Caco-2 (cell line): ENCODE measurements at regions of chr14 and their contacts with region 1.

Region 1: GRCh38 chr14:99683619-99684355 is at the start of gene CYP46A1:
- DNase-seq: peak; percentile 99
- H3K4me3 ChIP-seq: peak within 1 kb of the TSS; percentile 57
- H3K4me3 Mint-ChIP-seq: peak within 1 kb of the TSS; percentile 76
- H3K27ac Mint-ChIP-seq: no peak within 1 kb of the TSS
- H3K4me1 ChIP-seq: peaks cover 9% of the 10 kb centered on the region; the same call in 1 of the 2 replicates
- H3K4me1 Mint-ChIP-seq: peaks cover 7% of the 10 kb centered on the region
- H3K27me3 ChIP-seq: no peaks in the 10 kb centered on the region
- H3K27me3 Mint-ChIP-seq: peaks cover 24% of the 10 kb centered on the region
- CTCF ChIP-seq: no peak
- total RNA-seq, gene CYP46A1: 0.05 and 0.09 TPM in 2 replicates

Region 2: DNA sequence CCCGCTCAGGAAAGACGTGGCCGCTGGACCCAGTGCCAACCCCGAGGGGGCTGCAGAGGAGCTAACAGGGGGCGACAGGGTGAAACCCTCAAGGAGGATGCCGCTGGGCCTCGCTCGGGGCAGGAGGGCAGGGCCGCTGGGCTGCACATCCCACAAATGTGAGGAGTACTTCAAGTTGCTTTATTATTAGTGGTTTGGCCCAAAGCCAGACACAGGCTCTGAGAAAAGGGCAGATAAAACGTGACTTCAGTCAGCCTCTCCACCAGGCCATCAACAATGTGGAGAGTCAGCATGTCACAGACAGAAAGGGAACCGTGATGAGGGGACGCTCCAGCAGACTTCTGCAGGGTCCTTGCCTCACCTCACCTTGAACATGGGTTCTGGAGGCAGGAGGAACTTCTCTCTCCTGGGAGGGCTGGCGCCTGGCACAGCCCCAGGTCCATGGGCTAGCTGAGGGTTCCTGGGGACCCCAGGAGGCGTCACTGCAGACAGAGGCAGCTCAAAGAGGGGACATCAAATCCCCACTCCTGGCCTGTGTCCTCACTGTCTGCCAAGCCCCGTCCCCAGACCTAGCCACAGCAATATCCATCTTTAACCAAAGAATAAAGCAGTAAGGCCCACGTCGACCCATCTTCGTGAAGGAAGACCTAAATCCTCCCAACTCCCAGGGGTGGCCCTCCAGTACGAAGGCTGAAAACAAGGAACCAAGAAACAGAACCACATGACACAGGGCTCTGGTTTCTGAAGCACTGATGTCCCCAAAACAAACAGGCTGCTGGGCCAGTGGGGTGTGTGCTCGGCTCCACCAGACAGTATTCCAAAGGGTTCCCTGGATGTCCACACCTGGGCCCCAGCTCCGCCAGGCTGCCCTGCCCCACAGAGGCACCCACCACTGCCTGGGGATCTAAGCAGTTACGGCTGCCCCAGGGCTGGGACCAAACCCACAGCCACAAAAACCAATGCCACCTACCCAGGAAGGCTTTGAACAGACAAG is 114.9 kb before region 1 on chr14:
- CTCF ChIA-PET with region 1: no interaction called
- POLR2A ChIA-PET with region 1: no interaction called
- intact Hi-C with region 1: no loop called
- DNase-seq: no peak
- H3K4me3 ChIP-seq: no peak overlapping the region
- H3K4me3 Mint-ChIP-seq: no peak overlapping the region
- H3K27ac Mint-ChIP-seq: no peak overlapping the region
- H3K4me1 ChIP-seq: peaks cover 41% of the 10 kb centered on the region
- H3K4me1 Mint-ChIP-seq: peaks cover 23% of the 10 kb centered on the region
- H3K27me3 ChIP-seq: no peaks in the 10 kb centered on the region
- H3K27me3 Mint-ChIP-seq: no peaks in the 10 kb centered on the region
- CTCF ChIP-seq: no peak

Region 3: GRCh38 chr14:99793213-99794150 is 109.7 kb after region 1 on chr14 and contains the start of gene EML1:
- CTCF ChIA-PET with region 1: no interaction called
- POLR2A ChIA-PET with region 1: no interaction called
- intact Hi-C with region 1: loop called (anchors 5 kb)
- DNase-seq: peak; percentile 75 to 91
- H3K4me3 ChIP-seq: peak within 1 kb of the TSS; percentile 44
- H3K4me3 Mint-ChIP-seq: peak within 1 kb of the TSS; percentile 64
- H3K27ac Mint-ChIP-seq: peak within 1 kb of the TSS; percentile 57
- H3K4me1 ChIP-seq: no peaks in the 10 kb centered on the region
- H3K4me1 Mint-ChIP-seq: peaks cover 14% of the 10 kb centered on the region
- H3K27me3 ChIP-seq: no peaks in the 10 kb centered on the region
- H3K27me3 Mint-ChIP-seq: no peaks in the 10 kb centered on the region
- CTCF ChIP-seq: no peak
- total RNA-seq, gene EML1: 5.9 and 7.2 TPM in 2 replicates

Region 4: GRCh38 chr14:99884834-99885648 is 201.3 kb after region 1 on chr14:
- CTCF ChIA-PET with region 1: interaction called, 3 read pairs
- POLR2A ChIA-PET with region 1: no interaction called
- intact Hi-C with region 1: loop called (anchors 1 kb)
- DNase-seq: peak in 1 of 2 experiments; percentile 64
- H3K4me3 ChIP-seq: no peak overlapping the region
- H3K4me3 Mint-ChIP-seq: no peak overlapping the region
- H3K27ac Mint-ChIP-seq: no peak overlapping the region
- H3K4me1 ChIP-seq: no peaks in the 10 kb centered on the region
- H3K4me1 Mint-ChIP-seq: no peaks in the 10 kb centered on the region
- H3K27me3 ChIP-seq: no peaks in the 10 kb centered on the region
- H3K27me3 Mint-ChIP-seq: no peaks in the 10 kb centered on the region
- CTCF ChIP-seq: peak; percentile 66 to 74

Region 5: DNA sequence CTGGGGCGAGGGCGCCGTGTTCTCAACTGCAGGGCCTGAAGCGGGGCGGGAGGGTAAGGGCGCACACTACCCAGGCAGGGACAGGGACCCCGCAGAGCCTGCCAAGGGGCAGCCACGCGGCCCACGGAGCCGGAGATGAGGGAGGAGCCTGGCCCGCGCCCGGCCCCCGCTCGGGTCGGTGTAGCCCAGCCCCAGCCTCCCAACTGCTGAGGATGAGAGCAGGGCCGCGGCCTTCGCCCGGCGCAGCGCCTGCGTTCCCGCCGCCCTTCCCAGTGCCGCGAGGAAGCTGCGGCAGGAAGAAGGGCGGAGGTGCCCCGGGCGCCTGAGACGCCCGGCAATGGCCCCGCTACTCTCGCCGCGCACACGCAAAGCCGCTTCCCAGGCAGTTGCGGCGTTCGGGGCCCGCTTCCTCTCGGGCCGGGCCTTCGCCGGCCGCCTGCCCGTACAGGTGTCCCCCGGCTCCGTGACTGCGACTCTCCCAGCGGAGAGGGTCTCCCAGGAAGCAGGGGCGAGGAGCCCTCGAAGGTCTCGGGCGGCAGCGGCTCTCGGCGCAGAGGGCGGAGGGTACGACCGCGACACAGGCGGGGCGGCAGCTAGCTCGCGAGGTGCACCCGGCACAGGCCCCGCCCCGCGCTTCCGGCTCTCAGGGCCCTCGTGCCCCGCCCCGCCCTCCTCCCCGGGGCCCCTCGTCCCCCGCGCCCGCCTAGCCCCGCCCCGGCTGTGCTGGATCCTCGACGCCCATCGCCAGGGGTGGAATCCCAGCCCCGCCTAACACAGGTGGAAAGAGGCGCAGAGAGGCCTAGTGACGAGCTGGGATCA is 530.4 kb after region 1 on chr14:
- CTCF ChIA-PET with region 1: no interaction called
- POLR2A ChIA-PET with region 1: interaction called, 10 read pairs
- intact Hi-C with region 1: no loop called
- DNase-seq: peak; percentile 95 to 96
- H3K4me3 ChIP-seq: peak overlapping the region; percentile 89
- H3K4me3 Mint-ChIP-seq: peak overlapping the region; percentile 62
- H3K27ac Mint-ChIP-seq: peak overlapping the region; percentile 90
- H3K4me1 ChIP-seq: peaks cover 21% of the 10 kb centered on the region
- H3K4me1 Mint-ChIP-seq: peaks cover 8% of the 10 kb centered on the region
- H3K27me3 ChIP-seq: no peaks in the 10 kb centered on the region
- H3K27me3 Mint-ChIP-seq: no peaks in the 10 kb centered on the region
- CTCF ChIP-seq: no peak